ENCODE measurements at regions of chr6 and their contacts with region 1.

Region 1: GRCh38 chr6:150685860-150686259 is 86.2 kb downstream of the PLEKHG1 start:
- DNase-seq: peak; percentile 11
- ATAC-seq: peak; percentile 82
- H3K4me3 ChIP-seq: no peak overlapping the region
- H3K27ac ChIP-seq: no peak overlapping the region
- H3K4me1 ChIP-seq: peaks cover 10% of the 10 kb centered on the region
- H3K27me3 ChIP-seq: no peaks in the 10 kb centered on the region; a peak in 1 of 4 replicates
- CTCF ChIP-seq: peak; percentile 71 to 85 (median 80)
- EP300 ChIP-seq: no peak
- POLR2A ChIP-seq: no peak
- RAD21 ChIP-seq: peak; percentile 77

Region 2: GRCh38 chr6:150143516-150144293 is 542.2 kb before region 1 on chr6:
- CTCF ChIA-PET with region 1: no interaction called
- POLR2A ChIA-PET with region 1: no interaction called
- RAD21 ChIA-PET with region 1: no interaction called
- SMC1A ChIA-PET with region 1: no interaction called
- in situ Hi-C with region 1: no loop called
- intact Hi-C with region 1: no loop called
- DNase-seq: no peak
- ATAC-seq: no peak
- H3K4me3 ChIP-seq: no peak overlapping the region
- H3K27ac ChIP-seq: no peak overlapping the region
- H3K4me1 ChIP-seq: peaks cover 3% of the 10 kb centered on the region; the same call in 1 of the 2 replicates
- H3K27me3 ChIP-seq: peaks cover 4 to 20% of the 10 kb centered on the region in 2 experiments
- CTCF ChIP-seq: no peak
- EP300 ChIP-seq: no peak
- POLR2A ChIP-seq: no peak
- RAD21 ChIP-seq: no peak

Region 3: GRCh38 chr6:150632785-150633485 is 52.9 kb before region 1 on chr6:
- CTCF ChIA-PET with region 1: interaction called, 14 read pairs
- POLR2A ChIA-PET with region 1: no interaction called
- RAD21 ChIA-PET with region 1: interaction called, 10 read pairs
- SMC1A ChIA-PET with region 1: interaction called, 27 read pairs
- in situ Hi-C with region 1: no loop called
- intact Hi-C with region 1: loop called (anchors 5 kb)
- DNase-seq: peak; percentile 41
- ATAC-seq: peak; percentile 50
- H3K4me3 ChIP-seq: peak overlapping the region; percentile 71
- H3K27ac ChIP-seq: peak overlapping the region; percentile 69
- H3K4me1 ChIP-seq: peaks cover 24% of the 10 kb centered on the region
- H3K27me3 ChIP-seq: no peaks in the 10 kb centered on the region; a peak in 1 of 4 replicates
- CTCF ChIP-seq: no peak
- EP300 ChIP-seq: peak in 1 of 2 experiments; percentile 68; a peak in 1 of 4 replicates
- POLR2A ChIP-seq: peak; percentile 45; the same call in 1 of the 2 replicates
- RAD21 ChIP-seq: no peak

Region 4: GRCh38 chr6:150661216-150662007 is 24.4 kb before region 1 on chr6:
- CTCF ChIA-PET with region 1: interaction called, 13 read pairs
- POLR2A ChIA-PET with region 1: no interaction called
- RAD21 ChIA-PET with region 1: interaction called, 3 read pairs
- SMC1A ChIA-PET with region 1: interaction called, 6 read pairs
- in situ Hi-C with region 1: no loop called
- intact Hi-C with region 1: no loop called
- DNase-seq: no peak
- ATAC-seq: no peak
- H3K4me3 ChIP-seq: no peak overlapping the region
- H3K27ac ChIP-seq: no peak overlapping the region
- H3K4me1 ChIP-seq: no peaks in the 10 kb centered on the region
- H3K27me3 ChIP-seq: no peaks in the 10 kb centered on the region
- CTCF ChIP-seq: no peak
- EP300 ChIP-seq: no peak
- POLR2A ChIP-seq: no peak
- RAD21 ChIP-seq: no peak

Region 5: DNA sequence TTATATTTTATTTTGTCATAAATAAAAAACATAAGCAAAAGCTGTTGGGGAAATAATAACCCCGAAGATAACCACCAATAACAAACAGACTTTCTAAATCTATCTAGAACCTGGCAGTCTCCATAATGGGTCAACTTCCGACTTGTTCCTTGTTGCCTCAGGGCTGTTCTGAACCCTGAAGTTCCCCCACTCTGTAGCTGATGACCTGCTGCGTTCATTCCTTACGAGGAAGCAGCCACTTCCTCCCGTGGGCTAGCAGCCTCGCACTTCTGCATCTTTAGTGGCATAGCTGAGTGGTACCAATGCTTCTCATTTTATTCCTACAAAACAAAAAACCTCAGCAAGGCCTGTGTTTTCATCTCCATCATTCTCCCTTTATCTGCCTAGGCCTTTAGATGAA is 16.8 kb after region 1 on chr6:
- CTCF ChIA-PET with region 1: interaction called, 6 read pairs
- POLR2A ChIA-PET with region 1: no interaction called
- RAD21 ChIA-PET with region 1: no interaction called
- SMC1A ChIA-PET with region 1: interaction called, 10 read pairs
- in situ Hi-C with region 1: no loop called
- intact Hi-C with region 1: no loop called
- DNase-seq: no peak
- ATAC-seq: peak; percentile 78
- H3K4me3 ChIP-seq: no peak overlapping the region
- H3K27ac ChIP-seq: no peak overlapping the region
- H3K4me1 ChIP-seq: no peaks in the 10 kb centered on the region; the same call in 1 of the 2 replicates
- H3K27me3 ChIP-seq: no peaks in the 10 kb centered on the region
- CTCF ChIP-seq: no peak
- EP300 ChIP-seq: no peak
- POLR2A ChIP-seq: no peak
- RAD21 ChIP-seq: no peak

Region 6: GRCh38 chr6:150741633-150742504 is 56.0 kb after region 1 on chr6:
- CTCF ChIA-PET with region 1: interaction called, 45 read pairs
- POLR2A ChIA-PET with region 1: no interaction called
- RAD21 ChIA-PET with region 1: interaction called, 38 read pairs
- SMC1A ChIA-PET with region 1: interaction called, 25 read pairs
- in situ Hi-C with region 1: no loop called
- intact Hi-C with region 1: loop called (anchors 1 kb)
- DNase-seq: no peak
- ATAC-seq: peak; percentile 88
- H3K4me3 ChIP-seq: no peak overlapping the region
- H3K27ac ChIP-seq: no peak overlapping the region
- H3K4me1 ChIP-seq: no peaks in the 10 kb centered on the region
- H3K27me3 ChIP-seq: no peaks in the 10 kb centered on the region
- CTCF ChIP-seq: peak; percentile 52 to 61 (median 59); a peak in 5 of 6 replicates
- EP300 ChIP-seq: no peak
- POLR2A ChIP-seq: no peak
- RAD21 ChIP-seq: peak; percentile 85

Region 7: DNA sequence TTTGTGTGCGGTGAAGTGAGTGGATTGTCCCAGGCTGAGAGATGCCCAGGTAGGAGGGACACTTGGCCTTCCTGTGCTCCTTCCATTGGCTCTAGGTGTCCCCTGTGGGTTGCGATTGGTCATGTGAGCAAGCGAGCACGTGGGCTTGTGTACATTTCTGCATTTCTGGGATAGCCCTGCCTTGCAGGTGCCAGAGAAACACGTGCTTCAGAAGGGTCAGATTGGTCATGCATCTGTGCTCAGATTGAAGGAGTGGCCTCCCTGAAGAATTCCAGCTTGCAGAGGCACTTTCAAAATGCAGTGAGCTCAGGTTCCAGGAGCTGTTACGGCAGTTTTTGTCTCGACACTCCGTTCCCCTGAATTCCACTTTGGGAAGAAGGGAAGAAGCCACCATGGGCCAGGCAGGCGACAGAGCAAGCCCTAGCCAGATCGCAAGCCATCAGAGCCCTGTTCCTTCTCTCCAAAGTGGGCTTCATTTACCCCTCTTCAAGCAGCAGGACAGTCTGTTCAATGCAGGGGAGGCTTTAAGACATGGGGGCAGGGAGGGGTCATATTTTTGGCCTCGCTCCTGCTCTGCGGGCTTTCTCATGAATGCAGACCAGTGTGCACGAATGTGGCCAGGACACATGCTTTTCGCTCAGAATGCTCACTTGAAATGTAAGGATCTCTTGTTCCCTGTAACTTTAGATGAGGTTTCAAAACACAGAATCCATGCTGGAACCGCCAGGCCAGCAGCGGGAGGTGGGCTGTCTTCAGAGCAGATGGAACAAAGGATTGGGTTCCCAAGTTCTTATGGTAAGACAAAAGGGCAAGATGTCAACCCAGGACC is 475.3 kb after region 1 on chr6:
- CTCF ChIA-PET with region 1: no interaction called
- POLR2A ChIA-PET with region 1: no interaction called
- RAD21 ChIA-PET with region 1: no interaction called
- SMC1A ChIA-PET with region 1: no interaction called
- in situ Hi-C with region 1: no loop called
- intact Hi-C with region 1: no loop called
- DNase-seq: no peak
- ATAC-seq: no peak
- H3K4me3 ChIP-seq: no peak overlapping the region
- H3K27ac ChIP-seq: no peak overlapping the region
- H3K4me1 ChIP-seq: no peaks in the 10 kb centered on the region
- H3K27me3 ChIP-seq: no peaks in the 10 kb centered on the region
- CTCF ChIP-seq: no peak
- EP300 ChIP-seq: no peak
- POLR2A ChIP-seq: no peak
- RAD21 ChIP-seq: no peak

Measured in GM12878 (cell line).